ENCODE measurements at regions of chr17 and their contacts with region 1.

Region 1: DNA sequence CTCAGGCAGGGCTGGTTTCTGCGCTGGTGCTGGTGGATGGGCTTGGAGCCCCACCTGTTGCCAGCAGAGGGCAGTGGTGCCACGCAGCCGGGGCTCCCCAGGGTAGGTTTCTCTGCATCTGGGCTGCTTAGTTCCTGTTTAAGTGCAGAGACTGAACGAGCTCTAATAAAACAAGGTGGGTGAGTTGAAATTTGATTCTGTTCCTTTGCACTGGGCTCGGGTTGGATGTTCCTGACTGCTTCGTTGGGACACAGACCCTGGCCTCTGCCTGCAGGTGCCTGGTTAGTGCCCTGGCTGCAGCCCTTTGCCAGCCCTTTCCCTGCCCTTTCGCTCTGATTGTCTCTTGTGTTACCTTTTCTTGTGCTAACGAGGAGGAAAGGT is 30.0 kb downstream of the TBCD start:
- DNase-seq: peak; percentile 90
- H3K27ac ChIP-seq: peak overlapping the region; percentile 43
- CTCF ChIP-seq: peak; percentile 97

Region 2: GRCh38 chr17:82836823-82837357 is 55.0 kb after region 1 on chr17:
- CTCF ChIA-PET with region 1: interaction called, 11 read pairs
- POLR2A ChIA-PET with region 1: no interaction called
- DNase-seq: no peak
- H3K27ac ChIP-seq: peak overlapping the region; percentile 97
- CTCF ChIP-seq: no peak

Region 3: GRCh38 chr17:82871056-82871903 is 89.4 kb after region 1 on chr17:
- CTCF ChIA-PET with region 1: interaction called, 11 read pairs
- POLR2A ChIA-PET with region 1: no interaction called
- DNase-seq: no peak
- H3K27ac ChIP-seq: peak overlapping the region; percentile 20
- CTCF ChIP-seq: no peak